IMR-90 (cell line): ENCODE measurements at regions of chrX and their contacts with region 1.

Region 1: GRCh38 chrX:47384502-47384901 is 14.1 kb downstream of the ZNF157 start:
- DNase-seq: peak; percentile 57
- ATAC-seq: no peak
- H3K4me3 ChIP-seq: no peak overlapping the region
- H3K27ac ChIP-seq: no peak overlapping the region
- H3K4me1 ChIP-seq: no peaks in the 10 kb centered on the region
- H3K27me3 ChIP-seq: peaks cover 9% of the 10 kb centered on the region
- CTCF ChIP-seq: peak; percentile 66
- POLR2A ChIP-seq: no peak
- RAD21 ChIP-seq: peak; percentile 71

Region 2: DNA sequence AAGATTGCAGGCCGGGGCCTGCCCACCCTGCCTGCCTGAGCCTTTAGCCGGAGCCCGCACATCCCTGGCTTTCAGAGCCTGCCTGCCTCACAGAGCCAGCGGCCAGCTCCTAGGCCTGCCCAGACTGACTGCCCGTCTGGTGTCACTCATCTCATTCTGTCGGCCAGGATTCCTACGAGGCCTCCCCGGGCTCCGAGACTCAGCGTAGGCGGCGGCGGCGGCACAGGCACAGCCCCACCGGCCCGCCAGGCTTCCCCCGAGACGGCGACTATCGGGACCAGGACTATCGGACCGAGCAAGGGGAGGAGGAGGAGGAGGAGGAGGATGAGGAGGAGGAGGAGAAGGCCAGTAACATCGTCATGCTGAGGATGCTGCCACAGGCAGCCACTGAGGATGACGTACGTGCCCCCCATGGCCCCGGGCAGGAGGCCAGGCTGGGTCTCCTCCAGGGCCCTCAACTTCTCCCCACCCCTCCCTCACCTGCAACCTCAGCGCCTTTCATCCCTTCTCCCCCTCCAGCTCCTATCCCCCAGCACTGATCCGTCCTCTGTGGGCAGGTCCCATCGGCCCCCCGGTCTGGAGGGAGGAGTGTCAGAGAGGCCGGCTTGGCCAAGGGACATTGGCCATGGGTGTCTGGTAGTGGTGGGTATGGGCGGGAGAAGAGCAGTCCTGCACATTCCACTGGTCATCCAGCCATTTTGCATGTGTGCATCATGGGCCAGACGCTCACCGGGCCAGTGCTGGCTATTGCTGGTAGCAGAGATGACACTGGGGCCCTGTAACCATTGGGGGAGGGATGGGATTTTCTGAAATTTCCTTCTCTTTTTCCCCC is 213.4 kb before region 1 on chrX:
- CTCF ChIA-PET with region 1: no interaction called
- POLR2A ChIA-PET with region 1: no interaction called
- dilution Hi-C with region 1: no loop called
- in situ Hi-C with region 1: no loop called
- intact Hi-C with region 1: no loop called
- DNase-seq: no peak
- ATAC-seq: no peak
- H3K4me3 ChIP-seq: no peak overlapping the region
- H3K27ac ChIP-seq: no peak overlapping the region
- H3K4me1 ChIP-seq: no peaks in the 10 kb centered on the region
- H3K27me3 ChIP-seq: peaks cover 10% of the 10 kb centered on the region; the same call in 1 of the 2 replicates
- CTCF ChIP-seq: no peak
- POLR2A ChIP-seq: no peak
- RAD21 ChIP-seq: no peak

Region 3: GRCh38 chrX:47193475-47194193 is 190.9 kb before region 1 on chrX and contains the start of gene UBA1:
- CTCF ChIA-PET with region 1: no interaction called
- POLR2A ChIA-PET with region 1: interaction called, 3 read pairs
- dilution Hi-C with region 1: no loop called
- in situ Hi-C with region 1: loop called (anchors 10 kb)
- intact Hi-C with region 1: loop called (anchors 1 kb)
- DNase-seq: peak; percentile 95
- ATAC-seq: peak; percentile 82
- H3K4me3 ChIP-seq: peak within 1 kb of the TSS; percentile 74
- H3K27ac ChIP-seq: peak within 1 kb of the TSS; percentile 87
- H3K4me1 ChIP-seq: peaks cover 24% of the 10 kb centered on the region
- H3K27me3 ChIP-seq: no peaks in the 10 kb centered on the region; the same call in 1 of the 2 replicates
- CTCF ChIP-seq: peak; percentile 92
- POLR2A ChIP-seq: peak; percentile 94
- RAD21 ChIP-seq: peak; percentile 92
- total RNA-seq, gene UBA1: 256 and 299 TPM in 2 replicates

Region 4: DNA sequence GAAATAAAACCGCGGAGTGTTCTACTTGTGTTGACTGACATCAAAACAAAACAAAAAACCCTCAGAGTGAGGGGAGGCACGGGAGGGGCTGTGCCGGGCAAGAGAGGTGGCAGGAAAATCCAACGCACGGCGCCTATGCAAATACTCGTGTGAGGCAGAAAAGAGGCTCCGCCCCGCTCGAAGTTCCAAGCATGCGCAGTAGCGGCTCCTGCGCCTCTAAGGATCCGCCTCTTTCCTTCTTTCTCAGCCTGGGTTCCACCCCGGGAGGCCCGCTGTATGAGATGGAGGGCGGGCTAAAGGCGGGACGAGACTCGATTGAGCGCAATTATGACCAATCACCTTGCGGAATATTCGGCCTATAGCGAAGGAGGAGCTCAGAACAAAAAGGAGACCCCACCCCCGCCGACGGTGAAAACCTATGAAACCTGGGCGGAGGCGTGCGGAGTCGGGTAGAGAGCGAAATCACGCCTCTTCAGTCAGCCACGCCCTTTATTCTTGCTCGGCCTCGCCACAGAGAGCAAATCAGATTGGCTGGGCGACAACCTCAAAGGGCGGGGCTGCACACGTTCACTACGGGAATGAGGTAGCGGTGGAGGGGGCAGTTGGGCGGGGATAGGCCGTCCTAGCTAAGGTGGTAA is 166.7 kb before region 1 on chrX:
- CTCF ChIA-PET with region 1: interaction called, 5 read pairs
- POLR2A ChIA-PET with region 1: no interaction called
- dilution Hi-C with region 1: no loop called
- in situ Hi-C with region 1: no loop called
- intact Hi-C with region 1: loop called (anchors 1 kb)
- DNase-seq: peak; percentile 98
- ATAC-seq: peak; percentile 86
- H3K4me3 ChIP-seq: peak overlapping the region; percentile 54
- H3K27ac ChIP-seq: peak overlapping the region; percentile 94
- H3K4me1 ChIP-seq: peaks cover 10% of the 10 kb centered on the region; the same call in 1 of the 2 replicates
- H3K27me3 ChIP-seq: no peaks in the 10 kb centered on the region
- CTCF ChIP-seq: no peak
- POLR2A ChIP-seq: no peak; the same call in 1 of the 2 replicates
- RAD21 ChIP-seq: no peak

Region 5: DNA sequence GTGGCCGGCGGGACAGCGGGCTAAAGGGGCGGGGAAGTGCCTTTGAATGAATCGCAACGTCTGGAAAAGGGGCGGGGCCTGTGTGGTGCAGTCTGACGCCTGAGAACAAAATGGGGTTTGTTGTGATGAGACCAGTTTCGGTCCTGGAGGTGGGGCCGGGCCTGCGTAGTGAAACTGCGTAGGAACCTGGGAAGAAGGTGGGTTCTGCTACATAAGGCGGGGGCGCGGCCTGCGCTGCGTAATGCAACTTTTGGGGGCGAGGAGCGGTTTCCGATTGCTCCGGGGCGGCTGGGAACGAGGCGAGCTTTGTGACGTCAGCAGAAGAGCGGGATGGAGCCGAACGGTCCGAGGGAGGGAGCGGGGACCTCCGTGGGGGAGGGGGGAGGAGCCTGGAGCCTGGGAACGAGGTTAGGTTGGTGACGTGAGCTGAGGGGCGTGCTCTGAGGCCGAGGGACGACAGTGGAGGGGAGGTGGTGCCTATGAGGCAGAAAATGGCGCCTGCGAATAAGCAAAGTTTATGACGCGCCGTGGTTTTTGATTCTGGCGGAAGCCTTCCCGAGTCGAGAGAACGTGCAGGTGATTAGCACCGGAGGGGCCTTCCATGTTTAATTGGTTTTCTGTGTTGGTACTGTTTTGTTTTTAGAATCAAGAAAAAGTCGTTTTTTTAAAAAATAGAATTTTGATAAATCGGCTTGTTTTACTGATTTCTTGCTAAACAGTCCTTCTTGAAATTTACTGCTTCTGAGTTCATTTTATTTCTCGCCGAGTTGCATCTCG is 151.0 kb before region 1 on chrX:
- CTCF ChIA-PET with region 1: no interaction called
- POLR2A ChIA-PET with region 1: no interaction called
- dilution Hi-C with region 1: no loop called
- in situ Hi-C with region 1: no loop called
- intact Hi-C with region 1: loop called (anchors 5 kb)
- DNase-seq: peak; percentile 97
- ATAC-seq: peak; percentile 93
- H3K4me3 ChIP-seq: peak overlapping the region; percentile 83
- H3K27ac ChIP-seq: peak overlapping the region; percentile 86
- H3K4me1 ChIP-seq: 0 out of 2 replicates have a peak, but pooled peaks cover 1% of the 10 kb centered on the region
- H3K27me3 ChIP-seq: peaks cover 9% of the 10 kb centered on the region
- CTCF ChIP-seq: no peak
- POLR2A ChIP-seq: peak; percentile 88
- RAD21 ChIP-seq: no peak

Region 6: GRCh38 chrX:47523297-47523696 is 138.8 kb after region 1 on chrX:
- CTCF ChIA-PET with region 1: no interaction called
- POLR2A ChIA-PET with region 1: no interaction called
- dilution Hi-C with region 1: no loop called
- in situ Hi-C with region 1: no loop called
- intact Hi-C with region 1: loop called (anchors 10 kb)
- DNase-seq: peak; percentile 55
- ATAC-seq: peak; percentile 98
- H3K4me3 ChIP-seq: peak overlapping the region; percentile 45
- H3K27ac ChIP-seq: peak overlapping the region; percentile 38
- H3K4me1 ChIP-seq: peaks cover 2% of the 10 kb centered on the region; the same call in 1 of the 2 replicates
- H3K27me3 ChIP-seq: no peaks in the 10 kb centered on the region
- CTCF ChIP-seq: peak; percentile 83
- POLR2A ChIP-seq: no peak
- RAD21 ChIP-seq: peak; percentile 87